Dorsolateral prefrontal cortex (tissue), 120 donors: ENCODE measurements at regions of chr2 and their contacts with region 1.

Region 1: DNA sequence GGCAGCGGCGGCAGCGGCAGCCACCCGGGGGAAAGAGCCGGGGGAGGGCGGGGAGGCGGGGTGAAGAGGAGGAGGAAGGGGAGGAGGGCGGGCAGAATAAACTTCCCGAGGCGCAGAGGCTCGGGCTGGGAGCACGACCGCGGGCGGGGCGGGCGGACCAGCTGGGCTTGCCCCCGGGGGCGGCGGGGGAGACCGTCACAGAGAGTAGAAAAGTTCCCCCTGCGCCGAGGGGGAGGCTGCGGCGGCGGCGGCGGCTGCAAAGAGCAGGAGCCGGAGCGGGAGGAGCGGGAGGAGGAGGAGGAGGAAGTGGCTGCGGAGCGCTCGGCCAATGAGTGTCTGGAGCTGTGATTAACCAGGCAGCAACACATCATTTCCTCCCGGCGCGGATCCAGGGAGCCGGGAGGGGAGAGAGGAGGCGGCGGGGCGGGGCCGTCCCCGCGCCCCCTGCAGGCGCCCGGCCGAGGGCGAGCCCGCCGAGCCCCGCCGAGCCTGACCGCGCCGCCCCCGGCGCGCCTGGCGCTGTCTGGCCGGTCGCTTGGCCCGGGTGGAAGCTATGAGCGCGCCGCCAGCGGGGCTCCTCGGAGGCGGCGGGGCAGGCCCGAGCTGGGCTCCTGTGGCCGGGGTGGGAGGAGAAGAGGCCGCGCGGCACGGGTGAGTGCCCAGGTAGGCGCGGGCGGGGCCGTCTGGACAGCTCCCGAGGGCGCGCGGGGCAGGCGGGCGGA is at the start of gene ACVR1:
- DNase-seq: peak; percentile 85 to 96 (median 94)
- H3K4me3 ChIP-seq: peak within 1 kb of the TSS; percentile 57 to 88 (median 78)
- H3K27ac ChIP-seq: peak within 1 kb of the TSS in 58 of 59 donors; percentile 59 to 97 (median 93)
- H3K27me3 ChIP-seq: no peaks in the 10 kb centered on the region
- CTCF ChIP-seq: peak in 41 of 56 donors; percentile 8 to 66 (median 36)
- total RNA-seq, gene ACVR1: 12.1 to 49.9 (median 22.3) TPM

Region 2: GRCh38 chr2:157336137-157337010 is 539.9 kb before region 1 on chr2:
- intact Hi-C with region 1: loop called (anchors 10 kb)
- DNase-seq: peak in 4 of 10 donors; percentile 15 to 44 (median 26)
- H3K4me3 ChIP-seq: peak overlapping the region in 5 of 59 donors; percentile 10 to 39 (median 18)
- H3K27ac ChIP-seq: peak overlapping the region in 5 of 59 donors; percentile 7 to 83 (median 75)
- H3K27me3 ChIP-seq: peaks cover 0 to 6% (median 0%) of the 10 kb centered on the region in 45 donors
- CTCF ChIP-seq: peak; percentile 50 to 87 (median 72)

Region 3: DNA sequence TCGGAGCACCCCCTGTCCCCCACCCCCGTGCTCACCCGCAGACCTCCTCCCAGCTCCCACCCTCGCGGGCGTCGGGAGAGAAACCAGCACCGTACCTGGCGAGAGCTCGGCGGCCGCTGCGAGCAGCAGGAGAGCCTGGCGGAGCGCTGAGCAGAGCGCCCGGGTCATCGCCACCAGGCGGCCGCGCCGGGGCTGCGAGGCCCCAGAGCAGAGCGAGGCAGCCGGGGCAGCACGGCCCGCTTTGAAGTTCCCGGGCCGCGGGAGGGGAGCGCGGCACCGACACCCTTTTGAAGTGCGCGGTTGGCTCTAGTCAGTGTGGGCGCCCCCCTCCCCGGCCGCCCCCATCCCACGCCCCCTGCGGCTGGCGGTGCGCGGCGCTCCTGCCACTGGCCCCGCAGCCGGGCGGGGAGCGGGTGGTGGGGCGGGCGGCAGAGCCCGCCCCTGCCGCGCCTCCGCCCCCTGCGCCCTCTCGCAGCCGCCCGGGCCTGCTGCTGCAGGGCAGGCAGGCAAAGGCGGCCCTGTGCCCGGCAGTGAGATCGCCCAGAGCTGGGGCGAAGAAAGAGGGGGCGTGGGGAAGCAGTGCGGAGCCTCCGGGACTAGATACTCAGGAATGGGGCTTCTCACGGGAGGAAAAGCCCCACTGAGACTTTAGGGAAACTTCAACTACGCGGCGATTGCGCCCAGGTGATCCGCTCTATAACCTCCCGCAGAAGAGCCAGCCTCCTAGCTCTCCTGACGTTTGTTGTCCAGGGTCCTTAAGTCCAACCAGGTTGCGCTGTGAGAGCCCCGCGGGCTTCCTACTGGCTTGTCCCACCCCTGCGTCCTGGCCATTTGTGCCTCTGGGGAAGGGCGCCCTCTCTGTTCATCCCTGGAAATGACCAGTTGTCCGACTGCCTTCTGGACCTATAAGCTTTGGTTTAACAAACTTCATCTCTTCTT is 247.5 kb before region 1 on chr2 and contains the start of gene ACVR1C:
- intact Hi-C with region 1: loop called in 1 of 2 experiments (anchors 10 kb)
- DNase-seq: peak; percentile 25 to 83 (median 75)
- H3K4me3 ChIP-seq: peak within 1 kb of the TSS; percentile 49 to 91 (median 75)
- H3K27ac ChIP-seq: peak within 1 kb of the TSS in 58 of 59 donors; percentile 54 to 98 (median 92)
- H3K27me3 ChIP-seq: no peaks in the 10 kb centered on the region
- CTCF ChIP-seq: peak in 55 of 56 donors; percentile 47 to 83 (median 68)
- total RNA-seq, gene ACVR1C: 5.3 to 20.6 (median 11.5) TPM

Region 4: GRCh38 chr2:157784169-157784822 is 91.9 kb before region 1 on chr2:
- intact Hi-C with region 1: loop called (anchors 5 to 10 kb)
- DNase-seq: peak in 8 of 10 donors; percentile 18 to 59 (median 38)
- H3K4me3 ChIP-seq: peak overlapping the region in 22 of 59 donors; percentile 4 to 52 (median 21)
- H3K27ac ChIP-seq: peak overlapping the region in 3 of 59 donors; percentile 6 to 31 (median 24)
- H3K27me3 ChIP-seq: no peaks in the 10 kb centered on the region
- CTCF ChIP-seq: no peak

Region 5: DNA sequence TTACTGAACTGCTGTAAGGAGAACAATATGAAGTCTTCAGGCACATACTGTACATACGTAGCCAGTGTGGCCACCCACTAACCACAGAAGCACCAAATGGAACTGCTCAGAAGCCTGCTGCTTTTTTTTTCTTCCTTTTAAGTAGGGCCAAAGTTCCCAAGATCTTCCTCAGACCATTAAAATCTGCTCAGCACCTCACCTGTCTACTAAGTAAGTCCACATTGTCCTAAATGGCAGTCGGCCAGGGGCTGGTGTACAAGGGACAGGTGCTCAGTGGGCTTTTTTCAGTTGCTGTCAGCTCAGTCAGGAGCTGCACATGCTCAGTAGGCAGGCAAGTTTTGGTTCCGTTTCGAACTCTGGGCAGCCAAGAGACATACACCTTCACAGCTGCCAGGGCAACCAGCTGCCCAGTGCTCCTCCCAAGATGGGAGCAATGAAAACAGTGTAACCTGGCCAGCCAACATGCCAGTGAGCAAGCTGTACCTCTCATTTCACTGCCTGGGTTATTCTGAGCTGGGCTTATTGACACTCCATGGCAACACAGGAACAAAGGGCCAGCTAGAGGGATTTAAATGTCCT is 86.2 kb before region 1 on chr2:
- intact Hi-C with region 1: loop called (anchors 5 to 10 kb)
- DNase-seq: no peak
- H3K4me3 ChIP-seq: no peak overlapping the region
- H3K27ac ChIP-seq: peak overlapping the region in 7 of 59 donors; percentile 1 to 61 (median 19)
- H3K27me3 ChIP-seq: no peaks in the 10 kb centered on the region
- CTCF ChIP-seq: no peak

Region 6: DNA sequence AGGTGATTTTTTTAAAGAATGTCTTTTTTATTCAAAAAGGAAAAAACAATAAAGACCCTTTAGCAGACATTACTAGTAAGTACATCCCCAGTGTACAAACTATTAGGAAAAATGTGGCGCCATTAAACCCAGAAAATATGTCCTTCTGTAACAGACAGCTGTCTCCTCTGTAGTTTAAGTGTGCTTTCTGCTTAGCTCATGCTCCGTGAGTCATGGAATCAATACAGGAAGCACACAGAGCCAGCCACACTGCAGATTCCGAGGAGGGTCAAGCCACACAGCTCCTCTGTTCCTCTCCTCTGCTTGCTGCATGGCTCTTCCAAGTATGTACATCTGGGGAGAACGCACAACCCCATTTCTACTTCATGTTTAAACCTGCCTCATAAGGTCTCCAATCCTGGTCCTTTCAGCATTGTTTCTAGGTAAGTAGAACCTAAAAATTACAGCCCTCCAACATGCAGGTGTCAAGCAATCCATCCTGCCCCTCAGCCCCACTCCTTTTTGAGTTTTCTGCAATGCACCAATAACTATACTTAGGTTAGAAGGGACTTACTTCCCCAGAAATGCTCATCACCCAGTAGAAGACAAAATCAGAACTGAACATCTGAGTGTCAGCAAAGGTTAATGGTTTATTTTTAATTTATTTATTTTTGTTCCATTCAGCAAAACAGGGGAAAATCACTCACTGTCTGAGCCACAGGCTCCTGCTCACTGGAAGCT is 37.6 kb before region 1 on chr2:
- intact Hi-C with region 1: loop called in 1 of 2 experiments (anchors 2 kb)
- DNase-seq: peak in 1 of 10 donors; percentile 17
- H3K4me3 ChIP-seq: peak overlapping the region in 54 of 59 donors; percentile 0 to 65 (median 42)
- H3K27ac ChIP-seq: peak overlapping the region in 26 of 59 donors; percentile 0 to 73 (median 31)
- H3K27me3 ChIP-seq: no peaks in the 10 kb centered on the region
- CTCF ChIP-seq: no peak

Region 7: DNA sequence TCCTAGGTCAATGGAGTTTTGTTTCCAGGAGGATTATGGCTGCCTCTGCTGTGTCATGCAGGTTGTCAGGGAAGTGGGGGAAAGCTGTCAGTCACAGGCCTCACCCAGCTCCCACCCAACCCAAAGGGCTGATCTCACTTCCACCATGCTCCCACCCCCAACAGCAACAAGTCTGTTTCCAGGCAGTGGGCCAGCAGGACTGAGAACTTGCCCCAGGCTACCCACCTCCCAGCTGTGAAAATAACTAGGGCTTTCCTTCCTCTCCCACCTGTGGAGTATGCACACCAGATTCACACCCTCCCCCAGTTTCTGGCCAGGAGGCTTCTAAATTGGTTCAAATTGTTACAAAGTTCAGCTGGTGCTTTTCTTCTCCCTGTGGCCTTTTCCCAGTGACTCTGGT is 95.5 kb after region 1 on chr2:
- intact Hi-C with region 1: no loop called
- DNase-seq: no peak
- H3K4me3 ChIP-seq: no peak overlapping the region
- H3K27ac ChIP-seq: no peak overlapping the region
- H3K27me3 ChIP-seq: no peaks in the 10 kb centered on the region
- CTCF ChIP-seq: no peak